Mammary epithelial cell (primary cell): ENCODE measurements at regions of chr10 and their contacts with region 1.

Region 1: GRCh38 chr10:59906417-59907202 is at the start of gene CCDC6:
- DNase-seq: peak; percentile 92
- H3K4me3 ChIP-seq: peak within 1 kb of the TSS; percentile 86 to 97 (median 97)
- H3K27ac ChIP-seq: peak within 1 kb of the TSS; percentile 98
- H3K4me1 ChIP-seq: peaks cover 48% of the 10 kb centered on the region
- H3K27me3 ChIP-seq: no peaks in the 10 kb centered on the region
- CTCF ChIP-seq: peak; percentile 49 to 76
- total RNA-seq, gene CCDC6: 52.4 to 76.0 TPM

Region 2: DNA sequence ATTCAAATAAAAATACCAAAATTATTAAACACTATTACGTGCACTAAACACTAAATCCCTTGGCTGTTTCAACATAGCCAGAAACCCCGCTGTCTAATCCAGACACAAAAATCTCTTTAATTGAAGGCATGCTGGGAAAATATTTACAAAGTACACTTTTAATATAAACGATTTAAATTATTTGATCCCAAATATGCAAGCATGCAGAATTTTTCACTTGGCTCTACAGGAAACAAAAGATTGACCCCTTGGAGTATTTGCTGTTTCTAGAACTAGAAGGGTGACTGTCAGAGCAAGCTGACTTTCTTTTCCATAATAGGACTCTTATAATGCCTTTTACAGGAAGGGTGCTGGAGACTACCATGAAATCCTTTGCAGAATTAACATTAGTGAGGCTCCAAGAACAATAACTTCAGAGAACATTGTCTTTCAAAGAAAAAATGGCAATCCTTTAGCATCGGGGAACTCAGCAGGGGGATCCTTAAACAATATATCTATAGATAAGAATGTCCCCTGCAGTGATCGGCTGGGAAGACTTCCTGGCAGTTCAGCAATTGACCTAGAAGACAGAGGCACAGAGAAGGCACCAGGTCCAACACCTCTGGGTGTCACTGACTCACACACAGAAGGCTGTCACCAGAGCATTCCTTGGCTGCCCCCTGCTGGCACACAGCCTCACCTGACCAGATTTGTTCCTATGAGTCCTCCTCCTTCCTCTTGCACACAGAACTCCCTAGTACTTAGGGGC is 97.5 kb before region 1 on chr10:
- CTCF ChIA-PET with region 1: no interaction called
- dilution Hi-C with region 1: no loop called
- in situ Hi-C with region 1: no loop called
- intact Hi-C with region 1: loop called (anchors 5 kb)
- DNase-seq: peak; percentile 57
- H3K4me3 ChIP-seq: no peak overlapping the region
- H3K27ac ChIP-seq: no peak overlapping the region
- H3K4me1 ChIP-seq: no peaks in the 10 kb centered on the region
- H3K27me3 ChIP-seq: no peaks in the 10 kb centered on the region
- CTCF ChIP-seq: peak; percentile 75 to 82

Region 3: DNA sequence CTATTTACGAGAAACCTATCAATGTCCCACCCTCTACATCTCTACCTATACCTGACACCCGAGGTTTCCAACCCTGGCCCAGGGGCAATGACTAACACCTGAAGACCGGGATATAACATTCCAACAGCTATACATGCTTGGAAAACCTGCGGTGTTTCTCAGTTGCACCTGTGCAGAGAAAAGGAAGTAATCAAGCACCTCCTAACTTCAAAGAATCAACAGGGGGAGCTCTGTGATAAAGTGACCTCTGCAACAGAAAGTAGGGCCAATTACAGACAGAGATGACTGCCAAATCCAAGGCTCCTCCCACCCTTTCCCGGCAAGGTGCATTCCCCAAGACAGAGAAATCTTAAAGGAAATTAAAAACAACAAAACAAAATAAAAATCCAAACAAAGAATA is 41.5 kb before region 1 on chr10:
- CTCF ChIA-PET with region 1: interaction called, 9 read pairs
- dilution Hi-C with region 1: no loop called
- in situ Hi-C with region 1: loop called in 1 of 2 experiments (anchors 5 kb)
- intact Hi-C with region 1: loop called (anchors 1 kb)
- DNase-seq: peak; percentile 70
- H3K4me3 ChIP-seq: no peak overlapping the region
- H3K27ac ChIP-seq: peak overlapping the region; percentile 37
- H3K4me1 ChIP-seq: peaks cover 23% of the 10 kb centered on the region
- H3K27me3 ChIP-seq: no peaks in the 10 kb centered on the region
- CTCF ChIP-seq: peak; percentile 53 to 77

Region 4: DNA sequence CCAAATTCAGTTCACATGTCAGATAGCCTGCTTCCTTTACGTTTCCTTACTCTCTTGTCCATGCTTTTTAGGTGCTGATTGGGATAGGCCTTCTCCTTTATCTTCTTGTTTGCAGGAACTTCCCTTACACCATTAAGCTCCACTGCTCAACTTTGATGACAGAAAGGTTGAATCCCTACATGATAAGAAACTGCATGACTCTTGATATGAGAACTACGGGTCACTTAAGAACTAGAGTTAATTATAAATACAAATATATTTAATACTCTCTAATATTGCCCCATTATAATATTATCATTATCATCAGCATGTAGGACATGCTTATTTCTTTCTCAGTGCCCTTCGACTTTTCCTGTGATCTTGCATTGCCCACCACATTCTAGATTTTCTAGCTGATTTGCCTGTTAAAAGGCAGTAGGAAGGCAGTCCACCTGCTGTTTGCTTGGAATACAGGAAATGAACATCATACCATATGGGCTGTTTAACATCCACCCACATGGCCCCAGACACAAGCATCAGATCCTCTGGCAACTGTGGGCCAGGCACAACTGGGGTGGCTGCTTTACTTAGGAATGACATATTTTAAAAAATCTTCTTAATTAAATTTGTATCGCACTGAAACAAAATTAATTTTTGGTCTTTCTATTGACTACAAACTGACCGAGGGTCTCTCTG is 59.5 kb after region 1 on chr10:
- CTCF ChIA-PET with region 1: no interaction called
- dilution Hi-C with region 1: no loop called
- in situ Hi-C with region 1: no loop called
- intact Hi-C with region 1: loop called (anchors 2 kb)
- DNase-seq: no peak
- H3K4me3 ChIP-seq: no peak overlapping the region
- H3K27ac ChIP-seq: peak overlapping the region; percentile 55
- H3K4me1 ChIP-seq: peaks cover 24% of the 10 kb centered on the region
- H3K27me3 ChIP-seq: no peaks in the 10 kb centered on the region
- CTCF ChIP-seq: no peak

Region 5: GRCh38 chr10:60032723-60033122 is 126.1 kb after region 1 on chr10:
- CTCF ChIA-PET with region 1: no interaction called
- dilution Hi-C with region 1: no loop called
- in situ Hi-C with region 1: no loop called
- intact Hi-C with region 1: loop called (anchors 1 kb)
- DNase-seq: peak; percentile 59
- H3K4me3 ChIP-seq: no peak overlapping the region
- H3K27ac ChIP-seq: no peak overlapping the region
- H3K4me1 ChIP-seq: no peaks in the 10 kb centered on the region
- H3K27me3 ChIP-seq: no peaks in the 10 kb centered on the region
- CTCF ChIP-seq: peak; percentile 69 to 71